Activated T-helper 2 cell treated with anti-CD3 and anti-CD28 coated beads, Interferon-gamma antibody, Interleukin-2, Interleukin-4, amounts not matched to agents 10 μg/mL and 5 μg/mL and 100 μg/mL, durations not matched to agents 14 hours and 24 hours and 36 hours (primary cell): ENCODE measurements at regions of chr14 and their contacts with region 1.

Region 1: DNA sequence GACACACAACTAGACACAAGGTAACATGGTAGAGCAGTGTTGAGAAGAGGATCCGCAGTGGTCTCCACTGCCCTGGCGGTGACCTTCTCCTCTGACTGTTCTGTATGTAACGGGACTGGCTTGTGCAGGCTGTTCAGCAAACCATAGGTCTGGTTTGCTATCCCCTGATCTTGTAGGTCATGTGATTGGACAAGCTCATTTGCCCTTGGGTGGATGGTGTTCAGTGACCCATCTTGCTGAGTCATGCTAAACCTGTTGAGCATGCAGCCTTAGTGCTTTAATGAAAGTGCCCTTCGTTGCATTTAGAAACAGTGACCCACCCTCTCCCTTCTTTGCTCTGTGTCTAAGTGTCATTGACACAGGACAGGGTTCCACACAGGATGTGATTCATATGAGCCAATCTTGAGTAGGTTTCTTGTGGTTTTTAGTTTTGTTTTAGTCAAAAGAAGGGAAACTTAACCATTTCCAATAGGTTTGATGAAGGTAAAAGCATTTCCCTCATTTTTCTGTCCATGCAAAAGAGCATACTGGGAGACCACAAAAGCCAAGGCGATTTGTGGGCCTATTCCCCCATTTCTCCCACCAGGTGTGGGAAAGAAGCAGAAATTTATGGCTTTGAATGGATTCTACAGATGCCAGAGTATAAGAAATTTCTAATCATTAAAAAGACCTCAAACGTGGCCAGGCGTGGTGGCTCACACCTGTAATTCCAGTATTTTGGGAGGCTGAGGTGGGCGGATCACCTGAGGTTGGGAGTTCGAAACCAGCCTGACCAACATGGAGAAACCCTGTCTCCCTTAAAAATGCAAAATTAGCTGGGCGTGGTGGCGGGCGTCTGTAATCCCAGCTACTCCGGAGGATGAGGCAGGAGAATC is 32.6 kb upstream of the HIF1A start:
- DNase-seq: peak; percentile 70
- H3K4me3 Mint-ChIP-seq: peak overlapping the region; percentile 73
- H3K27ac Mint-ChIP-seq: peak overlapping the region; percentile 96
- H3K4me1 Mint-ChIP-seq: peaks cover 63% of the 10 kb centered on the region
- H3K27me3 Mint-ChIP-seq: no peaks in the 10 kb centered on the region

Region 2: GRCh38 chr14:60647081-60647836 is 1015.4 kb before region 1 on chr14:
- intact Hi-C with region 1: no loop called
- DNase-seq: no peak
- H3K4me3 Mint-ChIP-seq: peak overlapping the region; percentile 61
- H3K27ac Mint-ChIP-seq: no peak overlapping the region
- H3K4me1 Mint-ChIP-seq: peaks cover 33% of the 10 kb centered on the region
- H3K27me3 Mint-ChIP-seq: peaks cover 86% of the 10 kb centered on the region

Region 3: DNA sequence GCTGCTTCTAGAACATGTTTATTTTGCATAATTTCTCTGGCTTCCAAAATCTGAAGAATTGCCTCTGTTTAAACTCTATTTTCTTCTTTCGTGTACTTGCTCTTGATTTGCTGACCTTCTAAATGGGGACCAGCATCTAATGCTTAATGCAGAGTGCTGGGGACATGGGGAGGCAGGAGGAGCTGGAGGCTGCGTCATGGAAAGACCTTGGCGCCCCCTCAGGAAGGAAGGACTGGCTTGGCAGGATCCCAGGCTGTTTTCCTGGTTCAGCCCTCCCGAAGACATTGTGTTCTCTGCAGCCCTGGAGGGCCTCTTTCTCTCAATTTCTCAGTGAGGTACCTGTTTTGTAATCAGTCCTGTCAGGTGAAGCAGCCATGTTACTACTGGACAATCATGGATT is 335.8 kb before region 1 on chr14:
- intact Hi-C with region 1: loop called (anchors 5 kb)
- DNase-seq: no peak
- H3K4me3 Mint-ChIP-seq: peak overlapping the region; percentile 76
- H3K27ac Mint-ChIP-seq: peak overlapping the region; percentile 86
- H3K4me1 Mint-ChIP-seq: peaks cover 61% of the 10 kb centered on the region
- H3K27me3 Mint-ChIP-seq: no peaks in the 10 kb centered on the region

Region 4: GRCh38 chr14:61388173-61388975 is 274.3 kb before region 1 on chr14:
- intact Hi-C with region 1: loop called (anchors 5 kb)
- DNase-seq: no peak
- H3K4me3 Mint-ChIP-seq: peak overlapping the region; percentile 26
- H3K27ac Mint-ChIP-seq: no peak overlapping the region
- H3K4me1 Mint-ChIP-seq: peaks cover 34% of the 10 kb centered on the region
- H3K27me3 Mint-ChIP-seq: no peaks in the 10 kb centered on the region

Region 5: DNA sequence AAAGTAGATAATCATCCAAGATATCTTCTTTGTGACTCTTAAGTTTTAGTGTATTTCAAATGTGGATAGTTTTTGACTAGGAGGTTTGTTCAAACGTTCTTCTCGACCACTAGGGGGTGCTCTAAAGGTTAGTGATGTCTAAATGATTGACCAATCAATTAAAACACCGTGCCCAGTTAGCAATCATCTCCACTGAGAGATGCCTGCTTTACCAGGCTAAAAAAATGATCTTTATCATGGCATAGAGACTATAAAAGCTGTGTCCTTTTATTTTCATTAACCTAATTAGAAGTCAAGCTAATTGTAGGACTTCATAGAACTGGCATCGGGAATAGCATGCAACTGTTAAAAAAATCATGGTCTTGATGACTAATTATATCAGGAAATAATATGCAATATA is 187.4 kb before region 1 on chr14:
- intact Hi-C with region 1: loop called (anchors 1 kb)
- DNase-seq: no peak
- H3K4me3 Mint-ChIP-seq: no peak overlapping the region
- H3K27ac Mint-ChIP-seq: peak overlapping the region; percentile 81
- H3K4me1 Mint-ChIP-seq: peaks cover 89% of the 10 kb centered on the region
- H3K27me3 Mint-ChIP-seq: no peaks in the 10 kb centered on the region

Region 6: DNA sequence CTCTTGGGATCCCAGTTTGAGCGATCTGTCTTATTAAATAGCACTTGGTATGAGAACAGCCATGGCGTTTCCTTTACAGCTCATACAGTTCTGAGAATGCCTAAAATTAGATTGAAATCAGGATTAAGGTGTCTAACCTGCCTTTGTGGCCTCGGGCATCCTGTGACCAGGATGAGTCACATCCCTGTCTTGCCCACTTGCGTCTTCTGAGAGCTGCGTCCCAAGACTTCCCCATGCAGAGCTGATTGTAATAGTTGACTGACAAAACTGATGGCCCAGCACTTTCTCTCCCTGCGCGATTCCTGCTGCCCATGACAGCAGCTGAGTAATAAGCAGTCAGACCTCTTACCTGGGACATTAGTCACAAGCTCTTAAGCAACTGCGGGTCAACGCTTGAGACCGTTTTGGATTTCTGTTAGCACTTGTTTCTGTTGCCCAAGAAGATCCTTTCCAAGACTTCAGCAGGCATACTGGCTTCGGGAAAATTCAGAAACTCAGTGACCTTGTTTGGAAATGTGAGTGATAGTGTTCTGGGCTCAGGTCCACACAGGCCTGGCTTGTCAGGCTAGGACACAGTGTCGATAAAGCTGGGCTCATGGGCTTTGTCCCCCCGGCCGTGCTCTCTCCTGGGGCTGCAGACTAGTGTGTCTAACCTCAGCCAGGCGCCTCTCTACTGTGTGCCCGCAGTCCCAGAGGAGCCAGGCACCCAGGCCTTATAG is 137.2 kb before region 1 on chr14:
- intact Hi-C with region 1: loop called (anchors 1 kb)
- DNase-seq: peak; percentile 60
- H3K4me3 Mint-ChIP-seq: peak overlapping the region; percentile 2
- H3K27ac Mint-ChIP-seq: peak overlapping the region; percentile 74
- H3K4me1 Mint-ChIP-seq: peaks cover 69% of the 10 kb centered on the region
- H3K27me3 Mint-ChIP-seq: no peaks in the 10 kb centered on the region

Region 7: DNA sequence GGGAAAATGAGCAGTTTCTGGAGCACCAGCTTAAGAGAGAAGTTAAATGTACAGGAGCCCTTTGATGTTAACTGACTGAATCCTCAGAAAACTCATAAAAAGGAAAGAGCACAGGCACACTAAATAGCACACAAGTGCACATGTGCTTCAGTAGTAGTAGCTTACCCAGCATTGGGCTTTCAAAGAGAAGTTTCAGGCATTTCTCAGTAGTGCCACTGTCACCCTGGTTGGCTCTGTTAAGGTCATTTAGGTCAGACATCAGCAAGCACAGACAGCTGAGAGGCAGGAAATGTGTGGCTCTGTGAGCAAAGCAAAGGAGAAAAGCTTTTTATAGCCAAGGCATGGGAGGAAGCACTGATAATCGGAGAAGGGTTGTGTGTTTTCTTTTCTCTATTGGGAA is 63.7 kb before region 1 on chr14:
- intact Hi-C with region 1: loop called (anchors 1 kb)
- DNase-seq: no peak
- H3K4me3 Mint-ChIP-seq: no peak overlapping the region
- H3K27ac Mint-ChIP-seq: peak overlapping the region; percentile 25
- H3K4me1 Mint-ChIP-seq: peaks cover 41% of the 10 kb centered on the region
- H3K27me3 Mint-ChIP-seq: peaks cover 6% of the 10 kb centered on the region

Region 8: GRCh38 chr14:61694830-61695694 is 32.4 kb after region 1 on chr14 and contains the start of gene HIF1A:
- intact Hi-C with region 1: loop called (anchors 1 kb)
- DNase-seq: peak; percentile 96
- H3K4me3 Mint-ChIP-seq: peak within 1 kb of the TSS; percentile 89
- H3K27ac Mint-ChIP-seq: peak within 1 kb of the TSS; percentile 95
- H3K4me1 Mint-ChIP-seq: peaks cover 50% of the 10 kb centered on the region
- H3K27me3 Mint-ChIP-seq: no peaks in the 10 kb centered on the region
- total RNA-seq, gene HIF1A: 131 and 138 TPM in 2 replicates